OCI-LY7 (cell line): ENCODE measurements at regions of chr9 and their contacts with region 1.

Region 1: DNA sequence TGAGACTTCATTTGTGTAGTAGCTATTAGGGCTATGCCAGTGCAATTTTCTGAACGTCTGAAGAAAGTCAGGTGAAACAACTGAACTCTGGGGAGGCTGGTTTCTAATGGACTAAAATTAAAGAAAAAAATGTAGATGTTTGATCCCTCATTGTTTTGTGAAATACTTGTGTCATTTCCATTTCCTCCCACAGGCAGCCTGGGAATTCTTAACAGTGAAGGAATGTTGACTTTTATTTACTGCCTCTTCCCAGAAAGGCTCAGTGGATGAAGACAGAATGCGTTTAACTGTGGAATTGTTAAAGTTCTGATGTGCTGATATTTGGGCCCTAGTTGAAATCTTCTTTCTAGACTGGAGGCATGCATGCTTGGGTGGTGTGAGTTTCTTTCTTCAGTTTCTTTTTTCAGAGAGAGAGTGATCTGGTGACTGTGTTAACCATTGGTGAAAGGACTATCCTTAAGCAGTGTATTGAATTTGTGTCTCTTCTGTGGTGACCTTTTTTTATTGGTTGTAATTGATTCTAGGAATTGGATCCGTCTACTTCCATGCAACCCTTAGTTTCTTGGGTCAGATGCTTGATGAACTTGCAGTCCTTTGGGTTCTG is 15.5 kb downstream of the ACER2 start:
- DNase-seq: no peak
- H3K4me3 ChIP-seq: no peak overlapping the region
- H3K27ac ChIP-seq: no peak overlapping the region
- H3K4me1 ChIP-seq: no peaks in the 10 kb centered on the region
- CTCF ChIP-seq: no peak

Region 2: DNA sequence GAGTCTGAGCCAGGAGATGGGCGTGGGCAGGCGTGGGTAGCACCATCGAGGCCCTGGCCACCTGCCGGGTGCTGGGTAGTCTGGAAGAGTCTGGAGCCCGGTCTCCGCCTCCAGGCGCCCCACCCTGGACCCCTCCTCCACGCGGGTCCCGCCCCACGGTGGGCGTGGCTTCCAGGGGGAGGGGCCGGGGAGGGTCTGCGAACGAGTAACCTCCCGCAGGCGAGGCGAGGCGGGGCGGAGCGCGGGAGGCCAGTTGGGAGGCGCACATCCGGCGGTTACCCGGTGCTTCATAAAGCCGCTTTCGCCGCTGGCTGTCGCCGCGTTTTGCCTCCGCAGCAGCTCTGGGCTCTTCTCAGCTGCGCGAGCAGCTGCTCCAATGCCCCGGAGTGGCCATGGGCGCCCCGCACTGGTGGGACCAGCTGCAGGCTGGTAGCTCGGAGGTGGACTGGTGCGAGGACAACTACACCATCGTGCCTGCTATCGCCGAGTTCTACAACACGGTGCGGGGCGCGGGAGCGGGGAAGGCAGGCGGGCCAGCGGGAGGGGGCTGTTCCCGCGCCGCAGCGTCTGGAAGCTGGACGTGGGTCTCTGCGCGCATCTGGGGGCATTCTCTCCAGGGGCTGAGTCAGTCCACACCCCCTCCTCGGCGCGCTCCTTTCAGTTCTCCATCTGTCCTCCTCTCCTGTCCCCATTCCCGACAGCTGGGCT is 15.4 kb before region 1 on chr9 and contains the start of gene ACER2:
- CTCF ChIA-PET with region 1: no interaction called
- POLR2A ChIA-PET with region 1: interaction called, 12 read pairs
- intact Hi-C with region 1: no loop called
- DNase-seq: peak; percentile 94
- H3K4me3 ChIP-seq: peak within 1 kb of the TSS; percentile 84
- H3K27ac ChIP-seq: peak within 1 kb of the TSS; percentile 37
- H3K4me1 ChIP-seq: peaks cover 10% of the 10 kb centered on the region
- CTCF ChIP-seq: 0 out of 2 replicates have a peak, but pooled peaks have one; percentile 6
- total RNA-seq, gene ACER2: 1.4 and 1.6 TPM in 2 replicates